ENCODE measurements at regions of chr1 and their contacts with region 1.

Region 1: GRCh38 chr1:119865627-119866026 is 30.7 kb downstream of the ADAM30 start:
- DNase-seq: no peak
- H3K4me3 ChIP-seq: no peak overlapping the region
- H3K27ac ChIP-seq: no peak overlapping the region
- H3K4me1 ChIP-seq: no peaks in the 10 kb centered on the region
- H3K27me3 ChIP-seq: no peaks in the 10 kb centered on the region
- CTCF ChIP-seq: no peak

Region 2: GRCh38 chr1:119808972-119809550 is 56.6 kb before region 1 on chr1:
- intact Hi-C with region 1: loop called (anchors 5 kb)
- DNase-seq: peak; percentile 84
- H3K4me3 ChIP-seq: no peak overlapping the region
- H3K27ac ChIP-seq: no peak overlapping the region
- H3K4me1 ChIP-seq: no peaks in the 10 kb centered on the region
- H3K27me3 ChIP-seq: no peaks in the 10 kb centered on the region
- CTCF ChIP-seq: peak; percentile 92

Region 3: GRCh38 chr1:119895986-119896702 is 30.5 kb after region 1 on chr1 and contains the start of gene ADAM30:
- intact Hi-C with region 1: no loop called
- DNase-seq: no peak
- H3K4me3 ChIP-seq: no peak within 1 kb of the TSS
- H3K27ac ChIP-seq: no peak within 1 kb of the TSS
- H3K4me1 ChIP-seq: no peaks in the 10 kb centered on the region
- H3K27me3 ChIP-seq: no peaks in the 10 kb centered on the region
- CTCF ChIP-seq: no peak
- total RNA-seq, gene ADAM30: not detected

Measured in colonic mucosa (tissue), 4 donors.